Aorta (tissue), 5 donors: ENCODE measurements at regions of chrX and their contacts with region 1.

Region 1: GRCh38 chrX:154384284-154384892 is 5.3 kb downstream of the EMD start:
- DNase-seq: peak in 1 of 2 donors; percentile 78
- ATAC-seq: no peak
- H3K4me3 ChIP-seq: no peak overlapping the region
- H3K27ac ChIP-seq: no peak overlapping the region
- H3K4me1 ChIP-seq: no peaks in the 10 kb centered on the region
- H3K27me3 ChIP-seq: no peaks in the 10 kb centered on the region

Region 2: DNA sequence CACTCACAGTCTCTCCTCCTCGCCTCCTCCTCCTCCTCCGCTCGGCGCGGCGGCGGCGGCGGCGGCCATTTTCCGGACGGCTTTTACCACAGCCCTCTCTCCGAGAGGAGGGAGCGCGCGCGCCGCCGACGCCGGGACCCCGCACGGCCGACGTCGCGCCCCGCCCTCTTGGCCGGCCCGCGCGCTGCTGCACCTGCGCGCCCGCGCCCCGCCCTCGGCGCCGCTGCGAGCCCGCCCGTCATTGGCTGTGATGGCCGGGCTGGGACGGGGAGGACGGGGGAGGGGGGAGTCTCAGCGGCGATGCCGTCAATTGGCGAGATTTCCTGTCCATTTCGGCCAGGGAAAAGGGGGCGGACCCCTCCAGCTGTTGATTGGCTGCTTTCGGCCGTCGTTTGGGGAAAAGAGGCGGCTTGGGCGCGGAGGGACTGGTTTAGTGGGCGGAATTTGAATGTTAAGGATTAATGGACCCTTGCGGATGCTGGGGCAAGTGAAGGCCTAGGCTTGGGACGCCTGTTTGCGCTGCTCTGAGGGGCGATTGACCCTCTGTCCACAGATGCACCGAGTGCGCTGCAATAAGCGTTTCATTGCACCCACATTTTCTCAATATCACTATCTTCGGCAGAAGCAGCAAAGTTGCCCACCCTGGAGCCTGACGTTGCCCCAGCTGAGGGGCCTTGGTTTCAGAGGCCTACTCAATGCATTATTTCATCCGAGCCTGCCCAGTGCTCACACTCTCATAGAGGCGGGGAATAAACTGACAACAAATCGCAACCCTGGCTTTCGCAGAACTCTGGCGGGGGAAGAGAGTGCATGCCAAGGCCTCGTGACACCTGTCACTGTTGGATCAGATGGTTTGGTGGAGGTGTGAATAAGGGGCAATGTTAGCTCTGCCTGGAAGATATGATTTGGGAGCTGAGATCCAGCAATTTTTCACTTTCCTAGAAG is 286.5 kb before region 1 on chrX and contains the start of gene MECP2:
- intact Hi-C with region 1: loop called in 1 of 2 experiments (anchors 5 kb)
- DNase-seq: peak; percentile 94
- ATAC-seq: peak; percentile 92
- H3K4me3 ChIP-seq: peak within 1 kb of the TSS; percentile 51 to 70
- H3K27ac ChIP-seq: peak within 1 kb of the TSS; percentile 45 to 99
- H3K4me1 ChIP-seq: no peaks in the 10 kb centered on the region
- H3K27me3 ChIP-seq: no peaks in the 10 kb centered on the region
- total RNA-seq, gene MECP2: 73.5 to 80.7 TPM